Head of caudate nucleus (tissue), 42 donors: ENCODE measurements at regions of chrX and their contacts with region 1.

Region 1: GRCh38 chrX:152941328-152942106 is 43.6 kb downstream of the ZNF185 start:
- DNase-seq: peak; percentile 75 to 95 (median 88)

Region 2: GRCh38 chrX:153507484-153508178 is 566.1 kb after region 1 on chrX:
- intact Hi-C with region 1: loop called (anchors 10 kb)
- DNase-seq: peak; percentile 69 to 94 (median 88)